ENCODE measurements at regions of chr7 and their contacts with region 1.

Region 1: GRCh38 chr7:3592401-3593135 is 291.5 kb downstream of the SDK1 start:
- DNase-seq: no peak
- ATAC-seq: no peak
- H3K4me3 Mint-ChIP-seq: no peak overlapping the region
- H3K27ac Mint-ChIP-seq: no peak overlapping the region
- H3K4me1 Mint-ChIP-seq: peaks cover 29% of the 10 kb centered on the region
- H3K27me3 Mint-ChIP-seq: no peaks in the 10 kb centered on the region
- CTCF ChIP-seq: no peak

Region 2: DNA sequence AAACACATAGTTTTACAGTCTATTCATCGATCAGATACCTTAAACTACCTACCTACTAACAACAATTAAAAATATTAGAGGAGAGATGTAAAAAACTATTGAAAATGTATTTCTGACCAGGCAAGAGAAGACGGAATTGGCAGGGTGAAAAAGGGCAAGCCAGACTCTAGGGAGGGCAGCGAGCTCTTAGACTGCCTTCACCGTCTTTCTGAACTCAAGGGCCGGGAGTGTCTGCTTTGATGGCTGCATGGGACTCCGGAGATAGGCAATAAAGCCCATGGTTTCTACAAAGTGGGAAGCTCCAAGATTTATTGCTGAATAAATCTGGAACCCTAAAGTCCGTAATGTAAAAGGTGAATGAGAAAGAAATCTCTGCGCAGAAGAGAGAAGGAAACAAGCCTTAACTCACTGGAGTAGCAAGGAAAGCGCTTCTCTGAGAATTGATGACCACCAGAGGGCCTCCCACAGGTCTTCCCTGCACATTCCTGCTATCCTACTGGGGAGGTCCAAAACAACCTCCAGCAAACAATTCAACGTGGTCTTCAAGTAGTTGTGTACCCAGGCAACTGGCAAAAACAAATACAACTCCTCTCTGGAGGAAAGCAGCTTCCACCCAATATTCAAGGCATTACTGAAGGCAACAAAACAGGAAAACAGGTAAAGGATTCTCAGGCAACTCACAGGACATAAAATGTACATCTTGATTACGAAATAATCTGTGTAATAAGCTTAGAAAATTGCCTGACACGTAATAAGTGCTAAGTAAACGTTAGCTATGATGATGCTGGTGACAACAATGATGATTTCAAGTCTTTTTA is 110.2 kb before region 1 on chr7:
- CTCF ChIA-PET with region 1: no interaction called
- POLR2A ChIA-PET with region 1: no interaction called
- intact Hi-C with region 1: loop called (anchors 2 kb)
- DNase-seq: no peak
- ATAC-seq: no peak
- H3K4me3 Mint-ChIP-seq: no peak overlapping the region
- H3K27ac Mint-ChIP-seq: no peak overlapping the region
- H3K4me1 Mint-ChIP-seq: peaks cover 4% of the 10 kb centered on the region
- H3K27me3 Mint-ChIP-seq: peaks cover 10% of the 10 kb centered on the region
- CTCF ChIP-seq: no peak

Region 3: DNA sequence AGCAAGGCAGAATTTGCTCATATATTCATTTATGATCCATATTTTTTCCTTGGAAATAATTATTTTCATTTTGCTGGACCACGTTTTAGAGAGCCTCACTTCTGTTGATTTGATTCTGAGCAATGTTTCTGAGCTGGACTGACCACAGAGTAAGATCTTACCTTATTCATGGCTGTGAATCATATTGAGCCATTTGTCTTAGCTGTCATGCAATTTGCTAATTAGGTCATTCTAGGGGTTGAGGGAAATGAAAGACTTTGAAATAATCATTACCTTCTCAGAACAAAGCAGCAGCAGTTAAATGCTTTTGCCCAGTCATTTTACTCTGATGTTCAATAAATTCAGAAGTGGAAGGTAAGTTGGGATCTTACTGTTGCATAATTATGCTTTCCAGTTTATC is 40.1 kb before region 1 on chr7:
- CTCF ChIA-PET with region 1: no interaction called
- POLR2A ChIA-PET with region 1: no interaction called
- intact Hi-C with region 1: no loop called
- DNase-seq: no peak
- ATAC-seq: no peak
- H3K4me3 Mint-ChIP-seq: no peak overlapping the region
- H3K27ac Mint-ChIP-seq: no peak overlapping the region
- H3K4me1 Mint-ChIP-seq: no peaks in the 10 kb centered on the region
- H3K27me3 Mint-ChIP-seq: peaks cover 35% of the 10 kb centered on the region
- CTCF ChIP-seq: no peak

Region 4: GRCh38 chr7:3573151-3573550 is 19.4 kb before region 1 on chr7:
- CTCF ChIA-PET with region 1: no interaction called
- POLR2A ChIA-PET with region 1: no interaction called
- intact Hi-C with region 1: loop called (anchors 2 kb)
- DNase-seq: no peak
- ATAC-seq: no peak
- H3K4me3 Mint-ChIP-seq: no peak overlapping the region
- H3K27ac Mint-ChIP-seq: no peak overlapping the region
- H3K4me1 Mint-ChIP-seq: no peaks in the 10 kb centered on the region
- H3K27me3 Mint-ChIP-seq: peaks cover 15% of the 10 kb centered on the region
- CTCF ChIP-seq: no peak

Region 5: DNA sequence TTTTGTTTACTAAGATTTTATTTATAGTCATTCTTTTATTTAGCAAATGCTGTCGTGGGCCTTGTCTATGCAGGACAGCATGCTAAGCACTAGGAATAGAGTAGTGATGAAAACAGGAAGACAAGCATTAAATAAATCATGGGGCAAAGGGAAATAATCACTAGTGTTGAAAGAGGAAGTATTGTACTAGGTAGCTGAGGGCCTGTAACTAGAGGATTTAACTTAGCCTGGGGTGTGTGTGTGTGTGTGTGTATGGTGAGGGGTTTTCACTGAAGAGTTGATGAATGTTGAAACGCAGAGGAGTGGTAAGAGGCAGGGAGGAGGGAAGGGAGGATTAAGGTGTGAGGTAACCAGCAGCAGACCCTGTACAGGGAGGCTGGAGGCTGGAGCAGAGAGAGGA is 154.9 kb after region 1 on chr7:
- CTCF ChIA-PET with region 1: no interaction called
- POLR2A ChIA-PET with region 1: no interaction called
- intact Hi-C with region 1: loop called (anchors 1 kb)
- DNase-seq: no peak
- ATAC-seq: peak; percentile 47
- H3K4me3 Mint-ChIP-seq: no peak overlapping the region
- H3K27ac Mint-ChIP-seq: peak overlapping the region; percentile 65
- H3K4me1 Mint-ChIP-seq: peaks cover 13% of the 10 kb centered on the region
- H3K27me3 Mint-ChIP-seq: no peaks in the 10 kb centered on the region
- CTCF ChIP-seq: no peak

Region 6: DNA sequence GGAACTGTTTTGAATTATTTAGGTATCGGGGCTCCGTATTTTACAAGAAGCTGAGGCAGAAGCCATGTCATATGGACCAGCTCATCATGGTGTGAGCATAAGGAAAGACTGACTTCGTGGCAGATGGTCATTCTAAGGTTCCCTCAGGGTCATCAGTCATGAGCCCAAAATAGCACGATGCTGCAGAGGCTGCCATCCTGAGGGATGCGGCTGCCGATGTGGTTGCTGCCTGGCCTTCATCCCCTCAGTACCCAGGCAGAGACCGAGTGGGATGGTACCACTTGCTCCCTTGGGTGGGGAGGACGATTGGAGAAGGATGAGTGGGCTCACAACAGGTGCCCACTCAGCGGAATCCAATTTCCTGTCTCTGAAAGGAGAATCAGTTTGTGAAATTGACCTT is 198.8 kb after region 1 on chr7:
- CTCF ChIA-PET with region 1: no interaction called
- POLR2A ChIA-PET with region 1: no interaction called
- intact Hi-C with region 1: no loop called
- DNase-seq: no peak
- ATAC-seq: no peak
- H3K4me3 Mint-ChIP-seq: no peak overlapping the region
- H3K27ac Mint-ChIP-seq: no peak overlapping the region
- H3K4me1 Mint-ChIP-seq: no peaks in the 10 kb centered on the region
- H3K27me3 Mint-ChIP-seq: peaks cover 20% of the 10 kb centered on the region
- CTCF ChIP-seq: no peak

Measured in activated B cell treated with CpG ODN at 0.5 μM for 24 hours (primary cell).